RWPE1 (cell line): ENCODE measurements at regions of chr3 and their contacts with region 1.

Region 1: DNA sequence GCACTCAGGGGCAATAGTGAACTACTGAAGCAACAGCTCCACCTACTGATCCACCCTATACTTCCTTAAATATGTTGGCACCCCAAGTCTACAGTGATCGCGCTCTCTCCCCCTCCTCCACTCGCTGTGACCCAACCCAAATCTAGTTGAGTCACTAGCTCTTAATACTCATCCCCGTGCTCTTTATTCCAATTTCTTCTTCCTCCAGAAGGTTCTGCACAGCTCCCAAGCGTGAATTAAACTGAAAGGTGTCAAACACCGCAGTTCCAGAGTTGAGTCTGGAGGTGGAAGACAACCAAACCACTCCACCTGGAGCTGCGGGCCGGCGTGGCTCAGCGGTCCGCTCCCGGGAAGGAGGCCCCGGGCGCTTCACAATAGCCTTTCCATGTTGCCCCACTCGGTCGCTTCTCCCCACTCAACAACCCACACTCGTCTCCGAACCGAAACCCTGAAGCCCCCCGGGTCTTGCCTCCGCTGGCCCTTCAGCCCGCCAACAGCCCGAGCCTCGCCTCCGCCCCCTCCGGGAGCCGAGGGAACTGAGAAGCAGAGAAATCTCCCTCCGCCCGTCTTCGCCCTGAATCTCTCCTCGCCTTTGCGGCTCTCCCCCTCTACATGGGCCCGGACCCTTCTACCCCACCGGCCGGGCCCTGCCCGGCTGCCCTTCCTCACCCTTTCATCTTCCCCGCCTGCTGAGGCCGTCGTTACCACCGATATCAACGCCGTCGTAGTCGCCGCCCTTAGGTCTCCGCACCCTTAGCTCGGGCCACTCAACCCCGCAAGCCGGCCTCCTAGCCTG is 578 bp downstream of the NAA50 start:
- DNase-seq: peak; percentile 96
- H3K27ac ChIP-seq: peak overlapping the region; percentile 96
- CTCF ChIP-seq: peak; percentile 75

Region 2: DNA sequence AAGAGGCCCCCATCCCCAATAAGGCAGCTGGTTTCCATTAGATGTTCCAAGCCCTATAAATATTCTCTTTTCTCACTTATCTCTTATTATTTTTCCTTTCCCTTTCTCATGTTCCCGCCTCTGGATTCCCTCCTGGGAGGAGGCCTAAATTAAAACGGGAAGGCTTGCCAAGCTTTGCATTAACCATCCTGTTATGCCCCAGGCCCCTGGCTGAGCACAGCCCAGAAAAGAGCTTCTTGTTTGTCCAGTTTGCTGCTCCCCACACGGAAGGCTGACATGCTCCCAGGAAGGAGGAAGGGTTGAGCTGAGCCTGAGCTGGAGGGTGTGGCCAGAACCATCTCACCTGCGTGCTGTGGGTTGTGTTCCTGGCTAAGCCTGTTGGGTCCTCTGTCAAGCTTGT is 597.2 kb before region 1 on chr3:
- CTCF ChIA-PET with region 1: no interaction called
- POLR2A ChIA-PET with region 1: no interaction called
- DNase-seq: peak; percentile 38
- H3K27ac ChIP-seq: no peak overlapping the region
- CTCF ChIP-seq: no peak

Region 3: DNA sequence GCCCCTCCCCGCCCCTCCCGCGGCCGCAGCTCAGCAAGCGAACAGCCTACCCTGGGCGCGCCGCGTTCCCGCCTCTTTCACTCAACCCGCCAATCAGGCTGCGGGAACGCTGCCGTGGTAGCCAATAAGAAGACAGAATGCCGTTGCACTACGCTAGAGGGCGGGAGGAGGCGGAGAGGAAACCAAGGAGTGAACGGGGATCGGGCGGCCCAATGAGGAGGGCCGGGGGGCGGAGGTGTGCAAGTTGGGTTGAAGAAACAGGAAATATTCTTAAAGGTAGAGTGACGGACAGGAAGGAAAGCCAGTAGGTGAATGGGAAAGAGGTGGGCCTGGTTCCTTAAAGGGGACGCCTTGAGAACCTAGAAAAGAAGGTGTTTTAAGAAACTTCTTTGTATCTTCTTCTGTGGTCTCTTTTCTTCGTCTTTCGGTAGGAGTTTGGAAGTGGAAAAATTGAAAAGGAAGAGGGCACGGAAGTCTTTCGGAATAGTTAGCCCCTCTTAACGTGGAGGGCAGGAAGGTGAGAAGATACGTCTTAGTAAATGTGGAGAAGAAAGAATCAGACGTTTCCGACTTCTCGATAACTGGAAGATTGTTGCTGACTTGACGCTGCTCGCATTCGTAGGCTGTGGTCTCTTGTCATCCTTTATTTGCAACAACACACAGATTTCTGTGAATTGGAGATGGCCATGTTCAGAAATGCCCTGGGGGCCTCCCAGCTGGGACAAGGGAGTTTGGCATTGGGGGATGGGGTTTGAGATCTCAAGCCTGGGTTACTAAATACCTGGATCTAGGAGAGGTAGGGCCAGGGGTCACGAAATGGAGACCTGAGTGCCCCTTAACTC is 48.6 kb before region 1 on chr3:
- CTCF ChIA-PET with region 1: no interaction called
- POLR2A ChIA-PET with region 1: interaction called, 13 read pairs
- DNase-seq: peak; percentile 99
- H3K27ac ChIP-seq: peak overlapping the region; percentile 92
- CTCF ChIP-seq: no peak

Region 4: GRCh38 chr3:113776564-113776963 is 31.1 kb after region 1 on chr3:
- CTCF ChIA-PET with region 1: no interaction called
- POLR2A ChIA-PET with region 1: no interaction called
- DNase-seq: no peak
- H3K27ac ChIP-seq: no peak overlapping the region
- CTCF ChIP-seq: no peak

Region 5: DNA sequence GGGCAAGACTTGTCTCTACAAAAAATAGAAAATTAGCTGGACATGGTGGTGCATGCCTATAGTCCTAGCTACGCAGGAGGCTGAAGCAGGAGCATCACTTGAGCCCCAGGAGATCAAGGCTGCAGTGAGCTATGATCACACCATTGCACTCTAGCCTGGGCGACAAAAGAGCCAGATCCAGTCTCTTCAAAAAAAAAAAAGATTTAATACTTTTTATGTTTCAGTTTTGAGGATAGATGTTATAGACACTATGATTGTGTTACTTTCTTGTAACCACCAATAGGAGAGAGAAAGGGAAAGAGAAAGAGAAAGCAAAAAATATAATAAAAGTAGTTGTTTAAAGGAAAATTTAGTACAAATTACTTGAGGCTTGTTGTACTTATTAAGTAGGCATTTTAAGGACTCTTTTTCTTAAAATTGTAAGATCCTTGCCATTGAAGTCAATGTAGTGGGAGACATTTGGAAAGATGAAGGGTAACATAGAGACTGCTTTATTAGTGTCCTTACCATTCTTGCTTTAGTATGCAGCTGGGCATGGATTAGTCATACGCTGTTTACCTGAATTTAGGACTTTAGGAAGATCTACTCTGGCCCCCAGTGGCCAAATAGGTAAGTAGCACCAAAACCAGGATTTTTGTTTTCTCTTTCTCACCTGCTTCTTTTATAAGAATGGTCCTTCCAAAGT is 167.2 kb after region 1 on chr3:
- CTCF ChIA-PET with region 1: no interaction called
- POLR2A ChIA-PET with region 1: no interaction called
- DNase-seq: peak; percentile 74
- H3K27ac ChIP-seq: no peak overlapping the region
- CTCF ChIP-seq: peak; percentile 76